ENCODE measurements at regions of chr15 and their contacts with region 1.

Region 1: GRCh38 chr15:88620995-88621772 is at the start of gene AEN:
- DNase-seq: peak; percentile 94 to 97 (median 95)
- H3K4me3 ChIP-seq: peak within 1 kb of the TSS; percentile 79 to 92
- H3K4me3 Mint-ChIP-seq: peak within 1 kb of the TSS; percentile 88 to 96 (median 92)
- H3K27ac ChIP-seq: peak within 1 kb of the TSS; percentile 82
- H3K27ac Mint-ChIP-seq: peak within 1 kb of the TSS; percentile 89 to 97 (median 96)
- H3K4me1 ChIP-seq: peaks cover 49% of the 10 kb centered on the region
- H3K4me1 Mint-ChIP-seq: peaks cover 30 to 54% (median 42%) of the 10 kb centered on the region in 4 donors
- H3K27me3 ChIP-seq: no peaks in the 10 kb centered on the region
- H3K27me3 Mint-ChIP-seq: peaks cover 0 to 2% of the 10 kb centered on the region in 2 donors
- total RNA-seq, gene AEN: 54.5 to 56.8 TPM

Region 2: GRCh38 chr15:88303395-88303794 is 317.8 kb before region 1 on chr15:
- CTCF ChIA-PET with region 1: no interaction called
- POLR2A ChIA-PET with region 1: no interaction called
- intact Hi-C with region 1: no loop called
- DNase-seq: no peak
- H3K4me3 ChIP-seq: no peak overlapping the region
- H3K4me3 Mint-ChIP-seq: no peak overlapping the region
- H3K27ac ChIP-seq: no peak overlapping the region
- H3K27ac Mint-ChIP-seq: no peak overlapping the region
- H3K4me1 ChIP-seq: no peaks in the 10 kb centered on the region
- H3K4me1 Mint-ChIP-seq: no peaks in the 10 kb centered on the region
- H3K27me3 ChIP-seq: no peaks in the 10 kb centered on the region
- H3K27me3 Mint-ChIP-seq: peaks cover under 1 to 6% of the 10 kb centered on the region in 2 donors

Region 3: DNA sequence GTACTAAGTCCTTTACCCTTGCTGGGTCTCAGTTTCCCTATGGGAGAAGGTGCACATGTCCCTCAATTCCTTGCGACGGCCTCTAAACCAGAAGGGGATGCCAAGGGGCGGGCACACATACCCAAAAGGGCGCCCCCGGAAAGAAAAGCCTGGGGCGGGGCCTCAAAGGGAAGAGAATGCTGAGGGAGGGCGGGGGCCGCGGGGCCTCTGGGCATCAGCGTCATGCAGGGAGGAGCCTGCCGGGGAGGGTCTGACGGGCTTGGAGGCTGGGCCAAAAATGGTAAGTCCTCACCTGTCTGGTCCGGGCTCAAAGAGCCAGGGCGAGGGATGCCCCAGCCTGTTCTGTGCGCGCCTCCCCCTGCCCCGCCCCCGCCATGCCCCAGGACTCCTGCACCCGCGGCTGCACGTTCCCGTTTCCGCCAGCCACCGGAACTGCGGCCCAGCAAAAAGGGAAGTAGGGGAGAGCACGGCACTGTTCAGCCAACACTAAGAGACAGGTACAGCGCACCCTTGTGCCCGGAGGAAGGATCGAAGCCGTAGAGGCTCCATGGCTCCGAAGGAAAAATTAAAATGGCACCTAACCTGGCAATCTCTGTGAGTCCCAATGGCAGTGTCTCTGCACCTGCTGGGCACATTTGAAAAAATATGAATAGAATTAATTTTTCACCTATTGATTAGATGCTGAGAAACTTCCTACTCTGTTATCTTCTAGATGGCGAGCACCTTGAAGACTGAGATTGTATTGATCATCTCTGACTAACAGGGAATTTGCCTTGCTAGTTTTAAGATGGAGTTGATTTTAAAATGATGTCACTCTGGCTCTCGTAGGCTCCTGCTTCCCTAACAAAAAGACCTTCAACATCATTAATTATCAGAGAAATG is 74.7 kb before region 1 on chr15 and contains the start of gene DET1:
- CTCF ChIA-PET with region 1: no interaction called
- POLR2A ChIA-PET with region 1: interaction called, 3 read pairs
- intact Hi-C with region 1: loop called (anchors 1 kb)
- DNase-seq: peak; percentile 92 to 97 (median 94)
- H3K4me3 ChIP-seq: peak within 1 kb of the TSS; percentile 34 to 63
- H3K4me3 Mint-ChIP-seq: peak within 1 kb of the TSS; percentile 92 to 95 (median 92)
- H3K27ac ChIP-seq: peak within 1 kb of the TSS; percentile 62
- H3K27ac Mint-ChIP-seq: peak within 1 kb of the TSS; percentile 86 to 97 (median 97)
- H3K4me1 ChIP-seq: peaks cover 9% of the 10 kb centered on the region
- H3K4me1 Mint-ChIP-seq: peaks cover 4 to 23% (median 8%) of the 10 kb centered on the region in 4 donors
- H3K27me3 ChIP-seq: no peaks in the 10 kb centered on the region
- H3K27me3 Mint-ChIP-seq: no peaks in the 10 kb centered on the region
- total RNA-seq, gene DET1: 11.5 to 11.7 TPM

Region 4: DNA sequence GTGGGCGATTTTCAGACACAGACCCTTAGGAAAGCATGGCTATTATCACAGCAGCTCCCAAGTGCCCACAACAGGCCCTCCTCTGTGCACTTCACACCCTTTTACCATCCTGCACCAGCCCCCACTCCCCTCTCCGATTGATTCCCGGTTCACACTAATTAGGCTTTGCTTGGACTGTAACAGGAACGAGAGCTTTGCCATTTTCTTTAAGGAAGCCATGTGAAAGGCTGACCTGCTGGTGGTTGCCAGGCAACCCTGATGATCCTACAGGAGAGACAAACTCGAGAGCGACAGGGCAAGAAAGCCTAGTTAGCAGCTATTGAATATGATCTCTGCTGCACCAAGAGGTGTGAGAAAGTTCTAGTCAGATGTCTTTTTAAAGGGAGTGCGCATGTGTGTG is 46.5 kb before region 1 on chr15:
- CTCF ChIA-PET with region 1: no interaction called
- POLR2A ChIA-PET with region 1: no interaction called
- intact Hi-C with region 1: no loop called
- DNase-seq: no peak
- H3K4me3 ChIP-seq: no peak overlapping the region
- H3K4me3 Mint-ChIP-seq: no peak overlapping the region
- H3K27ac ChIP-seq: no peak overlapping the region
- H3K27ac Mint-ChIP-seq: peak overlapping the region in 1 of 7 donors; percentile 0
- H3K4me1 ChIP-seq: no peaks in the 10 kb centered on the region
- H3K4me1 Mint-ChIP-seq: no peaks in the 10 kb centered on the region
- H3K27me3 ChIP-seq: no peaks in the 10 kb centered on the region
- H3K27me3 Mint-ChIP-seq: peaks cover 0 to 5% of the 10 kb centered on the region in 2 donors

Region 5: DNA sequence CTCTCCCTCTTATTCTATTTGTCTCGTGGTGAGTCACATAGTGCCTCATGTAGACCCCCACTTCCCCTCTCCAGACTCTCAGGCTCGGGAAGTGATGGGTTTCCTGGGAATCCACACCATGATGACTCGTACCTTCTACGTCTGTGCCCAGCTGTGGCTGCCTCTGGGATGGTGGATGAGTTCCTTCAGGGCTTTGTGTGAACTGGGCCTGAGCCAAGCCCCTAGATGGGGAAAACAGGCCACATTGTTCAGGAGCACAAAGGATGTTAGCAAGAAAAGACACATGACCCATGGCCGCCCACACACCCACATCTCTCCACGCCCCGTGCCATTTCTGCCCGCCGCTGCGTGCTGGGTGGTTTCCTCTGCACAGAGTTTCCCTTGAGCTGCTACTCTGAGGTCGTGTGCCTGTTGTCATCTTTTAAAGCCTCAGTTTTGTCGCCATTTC is 28.1 kb after region 1 on chr15:
- CTCF ChIA-PET with region 1: interaction called, 95 read pairs
- POLR2A ChIA-PET with region 1: interaction called, 113 read pairs
- intact Hi-C with region 1: no loop called
- DNase-seq: peak; percentile 62 to 76 (median 68)
- H3K4me3 ChIP-seq: peak overlapping the region in 1 of 2 donors; percentile 1
- H3K4me3 Mint-ChIP-seq: peak overlapping the region; percentile 22 to 89 (median 78)
- H3K27ac ChIP-seq: peak overlapping the region; percentile 78
- H3K27ac Mint-ChIP-seq: peak overlapping the region; percentile 94 to 98 (median 95)
- H3K4me1 ChIP-seq: peaks cover 96% of the 10 kb centered on the region
- H3K4me1 Mint-ChIP-seq: peaks cover 65 to 94% (median 79%) of the 10 kb centered on the region in 4 donors
- H3K27me3 ChIP-seq: no peaks in the 10 kb centered on the region
- H3K27me3 Mint-ChIP-seq: no peaks in the 10 kb centered on the region

Region 6: GRCh38 chr15:88664151-88664778 is 43.1 kb after region 1 on chr15:
- CTCF ChIA-PET with region 1: interaction called, 132 read pairs
- POLR2A ChIA-PET with region 1: interaction called, 113 read pairs
- intact Hi-C with region 1: loop called (anchors 1 kb)
- DNase-seq: peak; percentile 63 to 68 (median 66)
- H3K4me3 ChIP-seq: no peak overlapping the region
- H3K4me3 Mint-ChIP-seq: no peak overlapping the region
- H3K27ac ChIP-seq: no peak overlapping the region
- H3K27ac Mint-ChIP-seq: peak overlapping the region; percentile 22 to 84 (median 64)
- H3K4me1 ChIP-seq: peaks cover 17% of the 10 kb centered on the region
- H3K4me1 Mint-ChIP-seq: peaks cover 16 to 36% (median 24%) of the 10 kb centered on the region in 4 donors
- H3K27me3 ChIP-seq: no peaks in the 10 kb centered on the region
- H3K27me3 Mint-ChIP-seq: peaks cover 6 to 9% of the 10 kb centered on the region in 2 donors

Region 7: DNA sequence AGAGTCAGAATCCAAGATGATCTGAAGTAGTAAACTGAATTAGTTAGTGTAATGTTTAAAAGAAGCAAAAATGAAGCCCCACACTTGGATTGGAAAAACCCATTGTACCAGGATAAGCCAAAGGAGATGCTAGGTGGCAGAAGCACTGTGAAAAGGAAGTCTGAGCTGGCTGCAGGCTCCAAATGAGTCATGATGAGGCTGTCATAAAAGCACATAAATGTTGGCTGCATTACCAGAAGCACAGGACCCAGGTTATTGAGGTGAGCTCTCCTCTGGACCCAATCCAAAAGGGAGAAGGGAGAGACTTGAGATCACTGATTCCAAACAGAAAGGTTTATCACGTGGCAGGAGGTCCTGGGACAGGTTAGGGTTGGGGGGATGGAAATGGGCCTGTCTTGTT is 178.8 kb after region 1 on chr15:
- CTCF ChIA-PET with region 1: interaction called, 4 read pairs
- POLR2A ChIA-PET with region 1: no interaction called
- intact Hi-C with region 1: loop called (anchors 10 kb)
- DNase-seq: no peak
- H3K4me3 ChIP-seq: no peak overlapping the region
- H3K4me3 Mint-ChIP-seq: no peak overlapping the region
- H3K27ac ChIP-seq: no peak overlapping the region
- H3K27ac Mint-ChIP-seq: no peak overlapping the region
- H3K4me1 ChIP-seq: no peaks in the 10 kb centered on the region
- H3K4me1 Mint-ChIP-seq: peaks cover 4 to 14% (median 8%) of the 10 kb centered on the region in 4 donors
- H3K27me3 ChIP-seq: peaks cover 5% of the 10 kb centered on the region
- H3K27me3 Mint-ChIP-seq: peaks cover 54 to 55% of the 10 kb centered on the region in 2 donors

Region 8: GRCh38 chr15:88949734-88950400 is 328.7 kb after region 1 on chr15:
- CTCF ChIA-PET with region 1: no interaction called
- POLR2A ChIA-PET with region 1: no interaction called
- intact Hi-C with region 1: no loop called
- DNase-seq: no peak
- H3K4me3 ChIP-seq: no peak overlapping the region
- H3K4me3 Mint-ChIP-seq: no peak overlapping the region
- H3K27ac ChIP-seq: no peak overlapping the region
- H3K27ac Mint-ChIP-seq: peak overlapping the region in 1 of 7 donors; percentile 35
- H3K4me1 ChIP-seq: no peaks in the 10 kb centered on the region
- H3K4me1 Mint-ChIP-seq: no peaks in the 10 kb centered on the region
- H3K27me3 ChIP-seq: no peaks in the 10 kb centered on the region
- H3K27me3 Mint-ChIP-seq: peaks cover 1 to 2% of the 10 kb centered on the region in 2 donors

Region 9: DNA sequence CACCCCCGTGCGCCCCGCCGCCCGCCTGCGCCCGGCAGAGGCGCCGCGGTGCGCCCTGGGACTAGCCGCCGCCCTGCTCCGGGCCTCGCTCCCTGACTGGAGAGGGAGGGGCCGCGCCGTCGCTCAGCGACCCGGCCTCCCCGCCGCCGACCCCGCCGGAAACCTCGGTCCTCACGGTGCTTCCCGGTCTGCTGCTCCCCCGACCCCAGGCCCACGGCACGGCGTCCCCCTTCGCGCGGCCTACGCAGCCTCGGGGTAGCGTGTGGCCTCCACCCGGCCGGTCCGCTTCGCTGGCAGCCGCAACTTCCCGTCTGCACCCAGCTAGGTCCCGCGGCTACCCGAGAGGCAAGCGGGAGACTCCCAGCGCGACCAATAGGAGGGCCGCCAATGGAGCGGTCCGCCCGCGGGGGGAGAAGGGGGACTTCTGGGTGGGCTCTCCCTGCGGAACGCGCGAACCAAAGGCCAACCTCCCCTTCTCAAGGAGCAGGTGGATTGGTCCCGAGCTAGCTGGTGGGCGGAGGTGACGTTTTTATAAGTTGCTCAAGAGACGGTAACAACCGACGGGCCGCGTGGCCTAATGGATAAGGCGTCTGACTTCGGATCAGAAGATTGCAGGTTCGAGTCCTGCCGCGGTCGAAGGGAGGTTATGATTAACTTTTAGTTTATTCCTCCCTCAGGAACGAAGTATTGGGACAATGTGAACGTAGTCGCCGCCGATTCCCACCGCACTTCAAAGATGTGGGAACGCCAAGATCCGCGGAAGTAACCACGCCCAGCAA is 713.5 kb after region 1 on chr15 and contains the start of gene POLG:
- CTCF ChIA-PET with region 1: no interaction called
- POLR2A ChIA-PET with region 1: no interaction called
- intact Hi-C with region 1: loop called (anchors 10 kb)
- DNase-seq: peak; percentile 99 to 100 (median 99)
- H3K4me3 ChIP-seq: peak within 1 kb of the TSS; percentile 81 to 92
- H3K4me3 Mint-ChIP-seq: peak within 1 kb of the TSS; percentile 90 to 100 (median 94)
- H3K27ac ChIP-seq: peak within 1 kb of the TSS; percentile 69
- H3K27ac Mint-ChIP-seq: peak within 1 kb of the TSS; percentile 88 to 100 (median 98)
- H3K4me1 ChIP-seq: peaks cover 54% of the 10 kb centered on the region
- H3K4me1 Mint-ChIP-seq: peaks cover 37 to 59% (median 47%) of the 10 kb centered on the region in 4 donors
- H3K27me3 ChIP-seq: no peaks in the 10 kb centered on the region
- H3K27me3 Mint-ChIP-seq: peaks cover 2 to 7% of the 10 kb centered on the region in 2 donors
- total RNA-seq, gene POLG: 148 to 151 TPM